MCF 10A (cell line): ENCODE measurements at regions of chr10 and their contacts with region 1.

Region 1: GRCh38 chr10:17637869-17638268 is 6.1 kb upstream of the STAM start:
- DNase-seq: no peak
- H3K4me3 Mint-ChIP-seq: no peak overlapping the region
- H3K27ac Mint-ChIP-seq: no peak overlapping the region
- H3K4me1 Mint-ChIP-seq: no peaks in the 10 kb centered on the region
- H3K27me3 Mint-ChIP-seq: no peaks in the 10 kb centered on the region
- CTCF ChIP-seq: no peak

Region 2: GRCh38 chr10:17617031-17617911 is 20.6 kb before region 1 on chr10 and contains the start of gene HACD1:
- CTCF ChIA-PET with region 1: interaction called, 13 read pairs
- POLR2A ChIA-PET with region 1: interaction called, 126 read pairs
- intact Hi-C with region 1: loop called (anchors 1 kb)
- DNase-seq: peak; percentile 74
- H3K4me3 Mint-ChIP-seq: peak within 1 kb of the TSS; percentile 80
- H3K27ac Mint-ChIP-seq: no peak within 1 kb of the TSS
- H3K4me1 Mint-ChIP-seq: peaks cover 8% of the 10 kb centered on the region
- H3K27me3 Mint-ChIP-seq: no peaks in the 10 kb centered on the region
- CTCF ChIP-seq: peak; percentile 10
- total RNA-seq, gene HACD1: 29.6 and 34.2 TPM in 2 replicates

Region 3: DNA sequence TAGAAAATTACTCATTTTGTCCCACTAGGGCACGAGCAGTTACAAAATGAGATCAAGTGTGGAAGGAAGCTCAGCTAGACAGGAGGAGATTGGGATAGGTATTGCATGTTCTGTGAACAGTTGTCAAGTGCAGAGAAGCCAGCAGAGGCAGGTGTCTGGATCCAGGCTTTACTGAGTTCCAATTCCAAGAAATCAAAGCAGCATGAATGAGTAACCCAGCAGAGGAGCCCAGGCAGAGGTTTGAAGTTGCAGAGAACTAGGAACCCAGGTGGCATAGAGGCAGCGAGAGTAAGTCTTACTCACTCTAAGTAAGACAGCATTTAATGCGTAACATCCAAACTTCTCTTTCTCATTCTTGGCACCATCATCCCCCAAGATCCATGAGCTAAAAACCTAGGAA is 183.1 kb after region 1 on chr10:
- CTCF ChIA-PET with region 1: no interaction called
- POLR2A ChIA-PET with region 1: no interaction called
- intact Hi-C with region 1: no loop called
- DNase-seq: no peak
- H3K4me3 Mint-ChIP-seq: no peak overlapping the region
- H3K27ac Mint-ChIP-seq: no peak overlapping the region
- H3K4me1 Mint-ChIP-seq: no peaks in the 10 kb centered on the region
- H3K27me3 Mint-ChIP-seq: peaks cover 17% of the 10 kb centered on the region
- CTCF ChIP-seq: no peak